Breast epithelium (tissue), 4 donors: ENCODE measurements at regions of chr15 and their contacts with region 1.

Region 1: DNA sequence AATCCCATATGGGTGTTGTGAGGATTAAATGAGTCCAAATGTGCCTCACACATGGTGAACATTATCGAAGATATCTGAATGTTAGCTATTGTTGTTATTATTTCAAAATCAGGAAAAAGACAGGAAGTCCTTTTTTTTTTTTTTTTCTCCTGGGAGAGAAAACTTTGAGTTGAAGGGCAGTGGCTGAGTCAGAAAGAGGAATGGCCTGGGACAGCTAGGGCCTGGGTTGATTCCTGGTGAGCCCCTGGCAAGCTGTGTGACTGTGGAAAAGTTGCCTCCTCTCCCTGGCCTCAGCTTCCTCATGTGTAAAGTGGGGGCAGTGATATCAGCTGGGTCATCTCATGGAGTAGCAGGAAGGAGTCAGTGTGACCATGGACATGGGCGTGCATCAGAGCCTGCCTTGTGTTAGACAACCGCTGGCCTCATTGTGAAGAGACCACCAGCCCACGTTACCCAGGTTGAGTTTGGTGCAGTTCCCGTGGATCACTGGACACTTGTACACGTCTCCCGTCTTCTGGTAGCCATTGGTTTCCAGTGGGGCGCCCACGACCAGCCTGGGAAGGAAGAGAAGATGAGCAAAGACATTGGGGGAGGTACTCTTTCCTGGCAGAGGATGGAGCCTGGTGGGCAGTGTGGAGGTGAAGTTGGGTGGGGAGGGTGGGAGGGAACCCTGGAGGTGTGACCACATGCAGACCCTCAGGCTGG is 63.1 kb downstream of the ITGA11 start:
- DNase-seq: no peak
- H3K4me3 ChIP-seq: no peak overlapping the region
- H3K27ac ChIP-seq: peak overlapping the region in 1 of 2 donors; percentile 74
- H3K4me1 ChIP-seq: peaks cover 0 to 13% of the 10 kb centered on the region in 2 donors
- H3K27me3 ChIP-seq: no peaks in the 10 kb centered on the region
- CTCF ChIP-seq: no peak
- POLR2A ChIP-seq: no peak

Region 2: GRCh38 chr15:68418611-68419161 is 49.8 kb after region 1 on chr15:
- intact Hi-C with region 1: loop called (anchors 2 kb)
- DNase-seq: peak in 1 of 2 donors; percentile 19
- H3K4me3 ChIP-seq: no peak overlapping the region
- H3K27ac ChIP-seq: peak overlapping the region in 1 of 2 donors; percentile 48
- H3K4me1 ChIP-seq: no peaks in the 10 kb centered on the region
- H3K27me3 ChIP-seq: no peaks in the 10 kb centered on the region
- CTCF ChIP-seq: no peak
- POLR2A ChIP-seq: no peak